Activated CD4-positive, alpha-beta T cell treated with anti-CD3 and anti-CD28 coated beads, Interleukin-2, amount 10 ng/mL, durations not matched to agents 24 days and 14 days (primary cell): ENCODE measurements at regions of chr6 and their contacts with region 1.

Region 1: DNA sequence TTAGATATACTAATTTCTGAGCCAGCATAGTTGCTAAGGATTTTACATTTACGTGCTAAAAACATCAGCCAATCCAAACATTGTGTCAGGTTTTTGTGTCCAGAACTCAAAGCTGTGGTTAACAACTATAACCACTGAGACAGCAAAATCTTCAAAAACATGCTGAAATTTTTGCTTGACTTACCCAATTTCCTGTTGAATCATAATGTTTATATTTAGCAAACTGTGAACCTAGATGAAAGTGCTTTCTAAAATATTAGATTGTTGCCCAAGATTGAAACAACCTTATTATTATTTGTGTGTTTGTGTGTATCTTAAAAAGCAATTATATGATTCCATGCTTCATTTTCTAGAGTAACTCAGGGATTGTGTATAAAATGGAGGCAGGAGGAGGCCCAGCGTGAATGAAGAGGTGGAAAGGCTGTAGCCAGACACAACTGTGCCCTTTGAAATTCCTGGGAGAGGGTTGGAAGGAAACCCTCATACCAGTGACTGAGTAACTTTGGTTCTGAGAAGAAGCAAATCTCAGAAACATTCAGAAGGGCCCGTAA is 48.0 kb downstream of the ARMC2 start:
- DNase-seq: peak; percentile 74
- H3K4me3 Mint-ChIP-seq: peak overlapping the region; percentile 66
- H3K27ac Mint-ChIP-seq: peak overlapping the region; percentile 92
- H3K4me1 Mint-ChIP-seq: peaks cover 37% of the 10 kb centered on the region
- H3K27me3 Mint-ChIP-seq: peaks cover 4% of the 10 kb centered on the region

Region 2: DNA sequence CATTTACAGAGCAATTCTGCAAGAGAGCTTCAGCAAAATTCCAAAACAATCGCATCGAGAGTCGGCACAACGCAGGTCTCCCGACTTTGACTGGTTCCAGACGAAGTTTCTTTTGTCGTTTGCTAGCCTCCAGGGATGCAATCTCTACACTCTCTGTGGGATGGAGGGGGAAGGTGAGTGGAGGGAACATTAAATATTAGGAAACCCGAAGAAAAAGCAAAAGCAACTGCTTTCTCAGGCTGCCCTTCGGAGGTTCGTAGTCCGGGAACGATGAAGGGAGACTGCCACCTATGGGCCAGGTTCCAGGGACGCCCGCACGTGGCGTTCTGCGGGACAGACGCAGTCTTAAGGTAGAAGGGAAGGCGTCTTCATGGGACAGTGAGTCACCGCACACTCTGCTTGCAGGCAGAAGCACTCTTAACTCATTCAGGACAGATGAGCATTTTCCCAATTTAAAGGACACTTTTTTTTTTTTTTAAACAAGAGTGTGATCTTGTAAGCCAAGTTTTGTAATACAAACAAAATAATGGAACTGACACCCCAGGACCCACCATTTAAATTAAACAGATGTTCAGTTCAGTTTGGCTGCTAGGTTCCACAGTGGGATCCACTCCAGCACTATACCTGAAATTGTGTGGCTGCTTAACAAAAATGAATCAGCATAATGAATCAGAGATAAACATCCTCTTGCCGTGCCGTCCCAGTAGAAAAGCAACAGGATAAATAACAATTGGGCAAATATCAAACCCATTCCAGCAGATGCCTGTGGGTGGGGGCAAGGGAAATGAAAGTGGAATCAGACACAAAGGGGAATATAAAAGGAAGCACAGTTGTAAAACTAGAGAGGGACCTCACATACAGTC is 113.8 kb before region 1 on chr6:
- intact Hi-C with region 1: loop called (anchors 2 kb)
- DNase-seq: peak; percentile 93
- H3K4me3 Mint-ChIP-seq: peak overlapping the region; percentile 82
- H3K27ac Mint-ChIP-seq: no peak overlapping the region
- H3K4me1 Mint-ChIP-seq: peaks cover 11% of the 10 kb centered on the region
- H3K27me3 Mint-ChIP-seq: peaks cover 63% of the 10 kb centered on the region

Region 3: DNA sequence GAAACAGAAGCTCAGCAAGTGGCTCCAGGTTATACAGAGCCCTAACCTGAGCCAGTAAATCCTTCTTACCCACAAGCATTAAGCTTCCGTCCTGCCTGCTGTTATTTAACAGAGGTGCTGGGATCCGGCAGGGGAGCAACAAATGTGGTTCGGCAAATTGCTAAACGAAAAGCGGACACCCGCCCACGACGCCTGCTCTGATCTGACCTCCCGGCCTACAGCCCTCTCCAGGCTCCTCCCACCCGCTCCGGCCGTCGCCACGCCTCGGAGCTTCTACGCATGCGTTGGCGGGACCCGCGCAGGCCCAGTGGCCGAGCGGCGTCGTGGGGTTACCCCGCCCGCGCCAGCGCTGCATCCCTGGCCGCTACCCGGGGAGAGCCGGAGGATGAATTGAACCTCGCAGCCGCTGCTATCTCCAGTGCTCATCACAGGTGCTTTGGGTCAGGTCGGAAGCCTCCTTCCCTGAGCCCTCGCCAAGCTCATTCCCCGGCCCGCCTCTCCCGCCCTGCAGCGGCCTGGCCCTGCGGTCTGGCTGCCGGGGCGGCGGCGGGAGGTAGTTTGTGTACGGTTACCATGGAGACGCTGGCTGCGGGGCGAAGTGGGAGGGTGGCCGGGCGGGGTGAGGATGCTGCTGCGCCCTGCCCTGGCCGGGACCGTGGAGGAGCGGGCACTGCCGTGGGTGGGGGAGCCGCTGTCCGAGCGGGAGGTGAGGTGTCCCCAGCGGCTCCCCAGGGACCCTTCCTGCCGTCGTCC is 47.9 kb before region 1 on chr6 and contains the start of gene ARMC2:
- intact Hi-C with region 1: loop called (anchors 1 kb)
- DNase-seq: peak; percentile 97
- H3K4me3 Mint-ChIP-seq: peak within 1 kb of the TSS; percentile 85
- H3K27ac Mint-ChIP-seq: peak within 1 kb of the TSS; percentile 74
- H3K4me1 Mint-ChIP-seq: peaks cover 19% of the 10 kb centered on the region
- H3K27me3 Mint-ChIP-seq: peaks cover 21% of the 10 kb centered on the region
- total RNA-seq, gene ARMC2: 2.7 and 3.3 TPM in 2 replicates

Region 4: DNA sequence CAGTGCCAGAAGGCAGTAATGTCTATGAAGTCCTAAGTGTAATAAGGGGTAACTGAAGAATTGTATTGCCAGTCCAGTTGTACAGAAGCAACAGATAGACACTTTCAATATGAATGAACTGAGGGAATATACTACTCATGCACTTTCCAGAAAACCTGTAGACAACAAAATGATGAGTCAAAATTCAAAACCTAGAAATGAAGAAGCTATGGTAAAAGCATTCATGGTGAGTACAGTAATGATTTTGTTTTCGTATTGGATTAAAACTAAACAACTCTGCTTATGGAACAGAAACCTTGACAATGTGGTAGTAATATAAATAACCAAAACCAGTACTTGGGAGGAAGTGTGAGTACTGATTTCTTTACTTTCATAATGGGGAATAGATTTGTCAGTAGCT is 13.0 kb before region 1 on chr6:
- intact Hi-C with region 1: loop called (anchors 1 kb)
- DNase-seq: no peak
- H3K4me3 Mint-ChIP-seq: peak overlapping the region; percentile 24
- H3K27ac Mint-ChIP-seq: peak overlapping the region; percentile 87
- H3K4me1 Mint-ChIP-seq: peaks cover 31% of the 10 kb centered on the region
- H3K27me3 Mint-ChIP-seq: peaks cover 28% of the 10 kb centered on the region

Region 5: DNA sequence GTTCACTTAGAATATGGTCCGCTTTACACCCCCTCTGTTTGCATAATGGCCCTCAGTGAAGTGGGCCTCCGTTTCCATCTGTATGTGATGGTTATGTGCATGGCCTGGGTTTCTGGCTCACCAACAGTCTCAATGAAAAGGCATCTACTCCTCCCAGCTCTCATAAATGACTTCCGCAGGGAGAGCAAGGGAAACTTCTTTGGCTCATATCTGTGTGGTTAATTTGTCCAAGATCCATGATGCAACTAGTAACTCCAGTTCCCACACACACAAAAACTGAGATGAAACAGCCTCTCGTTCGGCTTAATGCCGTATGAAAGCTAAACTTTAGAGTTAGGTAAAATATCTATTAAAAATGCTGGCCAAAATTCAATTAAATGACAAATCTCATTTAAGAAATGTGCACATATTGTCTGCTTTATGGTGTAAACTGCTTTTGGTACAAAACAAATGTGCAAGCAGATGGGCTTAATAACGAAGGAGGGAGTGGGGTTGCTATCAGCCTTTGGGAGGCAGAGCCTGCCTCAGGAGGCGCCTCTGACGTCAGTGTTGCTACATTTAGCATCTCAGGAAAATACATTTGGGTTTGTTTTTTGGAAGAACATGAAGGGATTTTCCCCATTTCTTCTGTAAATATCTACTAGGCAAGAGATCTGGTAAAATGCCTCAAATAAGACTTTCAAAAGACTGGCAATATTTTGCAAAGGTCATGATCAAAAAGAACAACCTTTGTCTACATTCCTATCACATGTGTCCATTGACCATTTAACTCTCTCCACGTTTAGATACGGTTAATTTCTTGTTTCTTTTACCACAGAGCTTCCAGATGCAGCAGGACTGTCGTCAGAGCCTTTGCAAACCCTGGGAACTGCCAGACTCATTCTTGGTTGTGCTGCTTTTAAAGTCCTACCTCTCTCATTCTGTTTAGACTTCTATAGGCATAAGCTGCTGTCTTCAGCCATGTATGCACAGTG is 48.8 kb after region 1 on chr6:
- intact Hi-C with region 1: loop called (anchors 2 kb)
- DNase-seq: no peak
- H3K4me3 Mint-ChIP-seq: peak overlapping the region; percentile 27
- H3K27ac Mint-ChIP-seq: peak overlapping the region; percentile 34
- H3K4me1 Mint-ChIP-seq: peaks cover 57% of the 10 kb centered on the region
- H3K27me3 Mint-ChIP-seq: no peaks in the 10 kb centered on the region

Region 6: GRCh38 chr6:109073344-109074132 is 177.4 kb after region 1 on chr6:
- intact Hi-C with region 1: loop called (anchors 1 kb)
- DNase-seq: peak; percentile 88
- H3K4me3 Mint-ChIP-seq: no peak overlapping the region
- H3K27ac Mint-ChIP-seq: no peak overlapping the region
- H3K4me1 Mint-ChIP-seq: peaks cover 17% of the 10 kb centered on the region
- H3K27me3 Mint-ChIP-seq: peaks cover 10% of the 10 kb centered on the region